CD8-positive, alpha-beta T cell (primary cell): ENCODE measurements at regions of chr2 and their contacts with region 1.

Region 1: DNA sequence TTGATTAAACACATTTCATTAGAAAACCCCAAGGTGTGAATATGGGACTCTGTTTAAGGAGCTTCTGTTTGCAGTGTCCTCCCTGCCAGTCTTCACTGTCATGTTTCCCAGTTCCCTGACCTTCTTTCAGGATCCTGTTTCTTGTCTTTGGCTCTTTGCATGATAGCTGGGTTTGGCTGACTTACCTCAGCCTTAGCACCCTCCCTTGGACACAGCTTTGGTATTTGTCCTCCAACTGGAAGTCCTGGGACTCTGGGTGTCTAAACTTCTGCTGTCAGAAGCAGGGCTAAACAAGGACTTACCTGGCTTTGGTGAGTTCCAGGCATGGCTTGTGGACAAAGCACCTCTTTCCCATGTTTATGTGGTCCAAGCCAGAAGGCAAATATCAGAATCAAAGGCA is 11.2 kb upstream of the PAIP2B start:
- DNase-seq: no peak
- ATAC-seq: no peak
- H3K4me3 ChIP-seq: no peak overlapping the region
- H3K4me3 Mint-ChIP-seq: no peak overlapping the region
- H3K27ac ChIP-seq: no peak overlapping the region
- H3K27ac Mint-ChIP-seq: no peak overlapping the region
- H3K4me1 ChIP-seq: no peaks in the 10 kb centered on the region
- H3K4me1 Mint-ChIP-seq: no peaks in the 10 kb centered on the region
- H3K27me3 ChIP-seq: no peaks in the 10 kb centered on the region
- H3K27me3 Mint-ChIP-seq: peaks cover 9% of the 10 kb centered on the region
- CTCF ChIP-seq: no peak

Region 2: GRCh38 chr2:71254078-71254477 is 16.0 kb after region 1 on chr2:
- CTCF ChIA-PET with region 1: no interaction called
- POLR2A ChIA-PET with region 1: no interaction called
- intact Hi-C with region 1: loop called in 1 of 2 experiments (anchors 2 kb)
- DNase-seq: no peak
- ATAC-seq: no peak
- H3K4me3 ChIP-seq: no peak overlapping the region
- H3K4me3 Mint-ChIP-seq: no peak overlapping the region
- H3K27ac ChIP-seq: no peak overlapping the region
- H3K27ac Mint-ChIP-seq: no peak overlapping the region
- H3K4me1 ChIP-seq: no peaks in the 10 kb centered on the region
- H3K4me1 Mint-ChIP-seq: no peaks in the 10 kb centered on the region
- H3K27me3 ChIP-seq: no peaks in the 10 kb centered on the region
- H3K27me3 Mint-ChIP-seq: peaks cover 31% of the 10 kb centered on the region
- CTCF ChIP-seq: no peak